ENCODE measurements at regions of chr3 and their contacts with region 1.

Region 1: DNA sequence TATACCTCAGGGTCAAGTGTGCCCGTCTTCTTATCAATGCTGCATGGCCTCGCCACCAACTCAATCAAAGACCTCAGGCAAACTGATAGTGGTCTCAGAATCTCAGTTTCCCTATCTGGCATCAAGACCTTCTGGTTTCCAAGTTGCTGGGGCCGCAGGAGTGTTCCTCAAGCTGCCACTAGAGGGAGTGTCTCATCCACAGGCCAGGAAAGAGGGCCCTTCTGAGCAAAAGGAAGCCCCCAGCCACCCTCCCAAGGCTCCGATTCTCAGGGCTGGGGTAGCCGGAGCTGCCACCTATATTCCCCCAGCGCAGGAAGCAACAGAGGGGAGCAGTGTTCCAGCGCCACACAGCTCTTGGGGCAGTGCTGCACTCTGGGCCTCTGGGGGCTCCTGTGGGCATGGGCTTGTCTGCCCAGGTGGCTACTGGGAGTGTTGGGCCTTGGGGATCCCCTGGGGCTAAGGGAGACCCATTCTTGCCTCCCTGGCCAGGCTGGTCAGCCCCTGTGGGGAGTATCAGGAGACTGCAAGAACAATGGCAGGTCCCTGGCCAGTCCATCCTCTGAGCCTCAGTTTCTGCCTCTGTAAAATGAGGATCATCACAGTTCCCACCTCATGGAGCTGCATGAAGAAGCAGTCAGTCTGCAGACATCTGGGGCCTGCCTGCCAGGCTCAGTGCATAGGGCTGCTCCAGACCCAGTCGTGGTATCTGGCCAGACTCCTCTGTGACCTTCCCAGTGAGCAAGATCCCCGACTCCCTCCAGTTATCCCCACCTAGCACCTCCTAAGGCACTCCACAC is 23.4 kb upstream of the SEC13 start:
- DNase-seq: peak; percentile 51 to 60
- H3K4me3 ChIP-seq: no peak overlapping the region
- H3K4me3 Mint-ChIP-seq: no peak overlapping the region
- H3K27ac Mint-ChIP-seq: no peak overlapping the region
- H3K4me1 ChIP-seq: no peaks in the 10 kb centered on the region
- H3K4me1 Mint-ChIP-seq: peaks cover 7% of the 10 kb centered on the region
- H3K27me3 ChIP-seq: 0 out of 2 replicates have a peak, but pooled peaks cover 1% of the 10 kb centered on the region
- H3K27me3 Mint-ChIP-seq: peaks cover 13% of the 10 kb centered on the region
- CTCF ChIP-seq: peak; percentile 83 to 89

Region 2: DNA sequence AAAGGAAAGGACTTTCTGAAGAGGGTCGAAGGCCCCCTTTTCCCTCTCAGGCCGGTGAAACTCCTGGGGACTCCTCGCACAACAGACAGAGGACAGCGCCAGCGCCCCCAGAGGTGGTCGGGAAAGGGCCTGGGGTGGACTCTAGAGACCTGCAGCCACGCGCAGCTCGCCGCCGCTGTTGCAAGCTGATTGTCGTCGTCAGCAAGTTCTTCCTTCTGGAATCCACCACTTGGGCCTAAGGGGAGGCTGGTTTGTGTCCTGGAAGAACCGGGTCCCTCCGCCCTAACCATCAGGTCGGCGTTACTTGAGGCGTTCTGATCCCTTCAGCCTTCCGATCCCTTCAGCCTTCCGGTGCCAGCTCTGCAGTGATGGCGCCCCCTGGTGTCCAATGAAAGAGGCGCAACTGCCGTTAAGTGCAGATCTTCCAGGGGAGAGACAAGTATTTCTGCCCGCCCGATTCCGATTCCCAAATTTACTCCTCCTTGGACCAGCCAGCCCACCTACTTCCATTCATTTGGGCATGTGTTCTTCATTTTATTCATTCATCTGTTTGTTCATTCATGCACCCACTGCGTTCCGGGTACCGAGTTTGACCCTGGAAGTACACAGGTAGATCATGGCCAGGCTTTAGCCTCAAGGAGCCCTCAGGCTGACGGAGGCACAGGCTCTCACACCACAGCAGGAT is 394.5 kb after region 1 on chr3:
- CTCF ChIA-PET with region 1: interaction called, 4 read pairs
- POLR2A ChIA-PET with region 1: no interaction called
- intact Hi-C with region 1: loop called (anchors 5 kb)
- DNase-seq: peak; percentile 61 to 74
- H3K4me3 ChIP-seq: no peak overlapping the region
- H3K4me3 Mint-ChIP-seq: no peak overlapping the region
- H3K27ac Mint-ChIP-seq: no peak overlapping the region
- H3K4me1 ChIP-seq: no peaks in the 10 kb centered on the region
- H3K4me1 Mint-ChIP-seq: no peaks in the 10 kb centered on the region
- H3K27me3 ChIP-seq: no peaks in the 10 kb centered on the region
- H3K27me3 Mint-ChIP-seq: peaks cover 21% of the 10 kb centered on the region
- CTCF ChIP-seq: peak; percentile 78 to 81

Measured in Caco-2 (cell line).